ENCODE measurements at regions of chr9 and their contacts with region 1.

Region 1: DNA sequence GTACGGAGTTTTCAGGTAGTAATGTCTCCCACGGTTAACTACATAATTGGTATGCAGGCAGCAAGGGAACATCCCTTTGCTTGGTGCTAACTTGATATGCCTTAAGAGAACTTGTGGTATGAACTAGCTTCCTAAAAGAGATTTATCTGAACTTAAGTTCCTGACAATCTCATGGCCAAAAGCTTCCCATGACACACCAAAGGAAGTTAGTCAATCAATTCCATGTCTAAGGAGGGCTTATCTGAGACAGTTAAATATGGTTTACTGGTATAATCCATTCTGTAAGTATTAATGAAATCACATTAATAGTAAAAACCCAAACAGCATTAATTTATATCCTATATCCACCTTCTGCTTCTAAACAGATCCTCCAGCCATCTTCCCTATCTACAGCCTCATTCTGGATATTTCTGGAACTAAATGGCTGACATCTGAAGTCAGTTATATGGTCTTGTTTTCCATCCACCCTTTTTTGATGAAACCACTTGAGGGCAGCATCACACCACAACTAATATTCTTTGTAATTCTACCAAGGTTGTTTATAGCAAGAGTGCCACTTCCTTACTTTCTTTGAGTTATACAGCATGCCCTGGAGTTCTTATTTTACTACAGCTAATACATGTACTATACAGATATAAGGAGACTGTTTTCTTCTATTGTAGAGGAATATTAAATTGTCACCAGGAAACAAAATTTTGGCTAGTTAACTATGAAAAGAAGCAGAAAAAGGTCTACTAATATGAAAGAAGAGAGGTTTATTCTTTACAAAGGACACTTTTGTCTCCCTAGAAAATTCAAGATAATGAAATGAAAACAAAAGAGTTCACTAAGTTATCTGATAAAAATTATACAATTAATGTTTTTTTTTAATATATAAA is 34.7 kb downstream of the SHOC1 start:
- DNase-seq: peak; percentile 69
- H3K4me3 ChIP-seq: no peak overlapping the region
- H3K27ac ChIP-seq: peak overlapping the region; percentile 8
- H3K4me1 ChIP-seq: no peaks in the 10 kb centered on the region
- H3K27me3 ChIP-seq: no peaks in the 10 kb centered on the region
- CTCF ChIP-seq: peak; percentile 59 to 61

Region 2: DNA sequence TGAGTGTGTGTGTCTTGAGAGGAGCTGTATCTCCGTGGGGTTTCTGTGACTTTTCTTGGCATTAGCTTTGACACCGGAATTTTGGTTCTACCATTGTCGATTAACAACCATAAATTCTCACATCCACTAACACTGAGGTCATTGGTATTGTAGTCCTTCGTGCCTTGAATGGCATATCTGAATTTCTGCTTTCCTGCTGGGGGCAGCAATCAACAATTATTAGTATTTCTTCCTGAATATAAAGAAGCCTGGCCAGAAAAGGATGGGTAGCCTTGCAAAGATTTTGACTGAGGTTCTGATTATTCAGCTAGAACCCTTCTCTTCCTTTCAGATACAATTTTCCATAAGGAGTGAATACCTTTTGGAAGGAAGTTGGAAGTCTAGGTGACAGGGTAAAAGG is 68.2 kb after region 1 on chr9:
- CTCF ChIA-PET with region 1: no interaction called
- dilution Hi-C with region 1: no loop called
- in situ Hi-C with region 1: no loop called
- intact Hi-C with region 1: loop called (anchors 2 kb)
- DNase-seq: no peak
- H3K4me3 ChIP-seq: no peak overlapping the region
- H3K27ac ChIP-seq: no peak overlapping the region
- H3K4me1 ChIP-seq: peaks cover 18% of the 10 kb centered on the region
- H3K27me3 ChIP-seq: no peaks in the 10 kb centered on the region
- CTCF ChIP-seq: peak in 1 of 2 donors; percentile 27

Region 3: GRCh38 chr9:111926421-111926875 is 166.4 kb after region 1 on chr9:
- CTCF ChIA-PET with region 1: no interaction called
- dilution Hi-C with region 1: no loop called
- in situ Hi-C with region 1: loop called in 1 of 2 experiments (anchors 25 kb)
- intact Hi-C with region 1: loop called (anchors 5 kb)
- DNase-seq: no peak
- H3K4me3 ChIP-seq: no peak overlapping the region
- H3K27ac ChIP-seq: no peak overlapping the region
- H3K4me1 ChIP-seq: peaks cover 7% of the 10 kb centered on the region
- H3K27me3 ChIP-seq: no peaks in the 10 kb centered on the region
- CTCF ChIP-seq: no peak

Region 4: DNA sequence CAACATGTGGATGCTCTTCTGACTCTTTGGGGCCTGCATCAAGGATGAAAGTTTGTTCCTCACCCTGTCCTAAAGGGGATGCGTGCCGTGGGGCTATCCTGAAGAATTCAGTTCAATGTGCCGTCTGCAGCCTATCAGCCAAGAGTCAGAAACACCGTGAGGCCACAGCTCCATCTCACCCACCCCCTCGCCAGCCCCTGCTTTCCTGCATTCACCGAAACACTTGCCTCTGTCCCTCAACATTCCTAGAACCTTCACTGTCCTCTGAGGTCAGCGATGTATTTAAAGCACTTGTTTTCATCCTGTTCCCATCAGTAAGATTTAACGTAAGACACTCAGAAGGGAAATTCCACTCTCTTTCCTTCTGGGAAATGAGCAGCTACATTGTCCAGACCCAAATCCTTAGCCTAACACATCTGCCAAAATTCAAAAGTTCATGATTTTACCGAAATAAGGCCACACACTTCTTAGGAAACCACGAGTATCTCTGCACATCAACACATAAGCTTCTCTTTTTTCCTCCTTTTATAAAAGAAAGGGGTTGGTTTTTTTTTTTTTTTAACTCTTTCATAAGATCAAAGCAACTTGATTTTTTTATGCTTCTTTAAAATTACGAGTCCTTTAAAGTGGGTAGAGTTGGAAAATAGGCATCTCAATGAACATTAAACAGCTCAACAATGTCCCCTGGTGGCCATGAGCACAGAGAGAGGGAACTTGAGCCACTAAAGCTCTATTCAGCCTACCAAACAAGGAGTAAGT is 314.4 kb after region 1 on chr9:
- CTCF ChIA-PET with region 1: interaction called, 6 read pairs
- dilution Hi-C with region 1: loop called (anchors 5 kb)
- in situ Hi-C with region 1: loop called in 1 of 2 experiments (anchors 5 kb)
- intact Hi-C with region 1: loop called (anchors 1 kb)
- DNase-seq: peak; percentile 62
- H3K4me3 ChIP-seq: no peak overlapping the region
- H3K27ac ChIP-seq: peak overlapping the region; percentile 2
- H3K4me1 ChIP-seq: peaks cover 14% of the 10 kb centered on the region
- H3K27me3 ChIP-seq: no peaks in the 10 kb centered on the region
- CTCF ChIP-seq: peak; percentile 98 to 99

Region 5: GRCh38 chr9:112361601-112362000 is 601.6 kb after region 1 on chr9:
- CTCF ChIA-PET with region 1: no interaction called
- dilution Hi-C with region 1: no loop called
- in situ Hi-C with region 1: loop called (anchors 25 kb)
- intact Hi-C with region 1: loop called (anchors 1 kb)
- DNase-seq: peak; percentile 29
- H3K4me3 ChIP-seq: no peak overlapping the region
- H3K27ac ChIP-seq: no peak overlapping the region
- H3K4me1 ChIP-seq: peaks cover 6% of the 10 kb centered on the region
- H3K27me3 ChIP-seq: no peaks in the 10 kb centered on the region
- CTCF ChIP-seq: peak; percentile 24 to 31